ENCODE measurements at regions of chr11 and their contacts with region 1.

Region 1: DNA sequence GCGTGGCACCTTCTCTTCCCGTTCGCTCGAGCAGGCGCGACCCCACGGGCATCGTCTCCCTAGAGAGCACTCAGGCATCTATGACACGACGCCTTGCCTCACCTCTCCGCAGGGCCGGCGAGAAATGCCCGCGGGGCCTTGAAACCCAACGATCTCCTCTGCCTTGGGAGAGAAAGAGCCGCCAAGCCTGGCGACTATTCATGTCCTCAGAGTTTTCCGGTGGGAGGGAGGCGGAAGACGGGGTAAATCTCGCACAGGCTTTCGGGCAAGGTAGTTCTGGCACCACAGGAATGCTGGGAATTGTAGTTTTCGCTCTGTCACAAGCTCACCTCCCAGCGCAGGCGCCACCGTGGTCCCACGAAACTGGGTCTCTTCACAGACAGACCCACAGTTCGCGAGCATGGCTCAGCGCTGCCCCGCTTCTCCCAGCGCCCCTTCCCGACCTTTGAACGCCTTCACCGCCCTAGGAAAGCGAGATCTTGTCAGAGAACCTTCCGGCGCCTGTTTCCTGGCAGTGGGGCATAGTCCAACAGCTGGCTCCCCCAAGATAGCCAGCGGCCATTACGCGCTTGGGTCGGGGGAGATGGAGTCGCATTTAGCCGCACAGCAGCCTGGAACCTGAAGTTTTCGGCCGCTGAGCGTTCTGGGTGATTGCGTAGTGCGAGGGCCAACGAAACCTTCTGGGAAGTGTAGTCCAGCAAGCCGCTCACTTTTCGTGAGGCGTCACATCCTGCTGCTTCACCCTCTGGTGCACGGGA is at the start of gene CCDC90B:
- DNase-seq: peak; percentile 95
- ATAC-seq: peak; percentile 94
- H3K4me3 ChIP-seq: peak within 1 kb of the TSS; percentile 68 to 91 (median 75)
- H3K27ac ChIP-seq: peak within 1 kb of the TSS; percentile 96
- H3K4me1 ChIP-seq: peaks cover 34% of the 10 kb centered on the region
- H3K27me3 ChIP-seq: no peaks in the 10 kb centered on the region
- CTCF ChIP-seq: peak; percentile 81
- EP300 ChIP-seq: peak in 1 of 2 experiments; percentile 15; a peak in 1 of 4 replicates
- POLR2A ChIP-seq: peak; percentile 75 to 98
- RAD21 ChIP-seq: no peak; the same call in 1 of the 2 replicates
- total RNA-seq, gene CCDC90B: 46.1 and 56.3 TPM in 2 replicates

Region 2: GRCh38 chr11:82980292-82980691 is 305.7 kb before region 1 on chr11:
- CTCF ChIA-PET with region 1: no interaction called
- POLR2A ChIA-PET with region 1: no interaction called
- in situ Hi-C with region 1: no loop called
- intact Hi-C with region 1: loop called (anchors 10 kb)
- DNase-seq: no peak
- ATAC-seq: no peak
- H3K4me3 ChIP-seq: no peak overlapping the region
- H3K27ac ChIP-seq: no peak overlapping the region
- H3K4me1 ChIP-seq: 0 out of 2 replicates have a peak, but pooled peaks cover 5% of the 10 kb centered on the region
- H3K27me3 ChIP-seq: no peaks in the 10 kb centered on the region
- CTCF ChIP-seq: no peak
- EP300 ChIP-seq: no peak
- POLR2A ChIP-seq: no peak
- RAD21 ChIP-seq: no peak

Region 3: GRCh38 chr11:83257761-83258168 is 28.2 kb before region 1 on chr11:
- CTCF ChIA-PET with region 1: no interaction called
- POLR2A ChIA-PET with region 1: interaction called, 12 read pairs
- in situ Hi-C with region 1: no loop called
- intact Hi-C with region 1: loop called (anchors 2 kb)
- DNase-seq: peak; percentile 56
- ATAC-seq: peak; percentile 41; the same call in 2 of the 3 replicates
- H3K4me3 ChIP-seq: no peak overlapping the region
- H3K27ac ChIP-seq: peak overlapping the region; percentile 61
- H3K4me1 ChIP-seq: peaks cover 55% of the 10 kb centered on the region
- H3K27me3 ChIP-seq: no peaks in the 10 kb centered on the region
- CTCF ChIP-seq: no peak
- EP300 ChIP-seq: 0 out of 4 replicates have a peak, but pooled peaks of 1 of the 2 experiments have one; percentile 58
- POLR2A ChIP-seq: no peak
- RAD21 ChIP-seq: no peak